ENCODE measurements at regions of chr9 and their contacts with region 1.

Region 1: GRCh38 chr9:19184144-19184917 is 46.2 kb upstream of the DENND4C start:
- DNase-seq: peak; percentile 81 to 88
- ATAC-seq: peak; percentile 85 to 98 (median 98)
- H3K4me3 ChIP-seq: no peak overlapping the region
- H3K4me3 Mint-ChIP-seq: peak overlapping the region; percentile 72
- H3K27ac ChIP-seq: peak overlapping the region; percentile 84
- H3K27ac Mint-ChIP-seq: peak overlapping the region; percentile 96 to 97
- H3K4me1 ChIP-seq: peaks cover 56% of the 10 kb centered on the region
- H3K4me1 Mint-ChIP-seq: peaks cover 26 to 32% of the 10 kb centered on the region in 2 donors
- H3K27me3 ChIP-seq: no peaks in the 10 kb centered on the region
- H3K27me3 Mint-ChIP-seq: no peaks in the 10 kb centered on the region
- CTCF ChIP-seq: no peak

Region 2: DNA sequence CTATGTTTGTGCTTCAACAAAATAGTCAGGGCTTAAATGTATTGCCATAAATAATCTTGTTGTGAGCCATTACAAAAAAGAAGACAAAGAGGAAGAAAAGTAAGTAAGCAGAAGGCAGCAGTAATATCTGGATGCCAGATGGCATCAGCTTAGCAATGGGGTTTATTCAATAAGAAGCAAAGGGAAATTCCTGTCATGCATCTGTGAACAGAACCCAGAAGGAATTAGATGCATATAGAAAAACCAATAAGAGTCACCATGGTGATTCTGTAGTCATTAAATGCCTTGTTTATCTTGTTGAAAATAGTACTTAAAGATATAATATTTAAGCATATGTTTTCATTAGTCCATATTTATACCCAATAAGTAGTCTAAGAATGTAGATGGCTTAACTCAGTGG is 494.4 kb before region 1 on chr9:
- intact Hi-C with region 1: no loop called
- DNase-seq: no peak
- ATAC-seq: no peak
- H3K4me3 ChIP-seq: no peak overlapping the region
- H3K4me3 Mint-ChIP-seq: no peak overlapping the region
- H3K27ac ChIP-seq: no peak overlapping the region
- H3K27ac Mint-ChIP-seq: no peak overlapping the region
- H3K4me1 ChIP-seq: no peaks in the 10 kb centered on the region
- H3K4me1 Mint-ChIP-seq: no peaks in the 10 kb centered on the region
- H3K27me3 ChIP-seq: no peaks in the 10 kb centered on the region
- H3K27me3 Mint-ChIP-seq: peaks cover 0 to 3% of the 10 kb centered on the region in 2 donors
- CTCF ChIP-seq: no peak

Region 3: DNA sequence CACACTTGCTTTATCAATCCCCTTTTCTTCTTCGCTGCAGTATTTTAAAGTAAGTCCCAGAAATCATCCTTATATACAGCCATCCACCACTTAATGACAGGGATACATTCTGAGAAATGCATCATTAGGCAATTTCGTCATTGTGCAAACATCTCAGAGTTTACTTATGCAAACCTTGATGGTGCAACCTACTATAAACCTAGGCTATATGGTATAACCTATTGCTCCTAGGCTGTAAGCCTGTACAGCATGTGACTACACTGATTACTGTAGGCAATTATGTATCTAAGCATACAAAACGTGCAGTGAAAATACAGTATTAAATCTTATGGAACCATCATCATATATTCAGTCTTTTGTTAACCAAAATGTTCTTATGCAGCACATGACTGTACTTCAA is 188.1 kb before region 1 on chr9:
- intact Hi-C with region 1: no loop called
- DNase-seq: no peak
- ATAC-seq: no peak
- H3K4me3 ChIP-seq: no peak overlapping the region
- H3K4me3 Mint-ChIP-seq: no peak overlapping the region
- H3K27ac ChIP-seq: no peak overlapping the region
- H3K27ac Mint-ChIP-seq: no peak overlapping the region
- H3K4me1 ChIP-seq: no peaks in the 10 kb centered on the region
- H3K4me1 Mint-ChIP-seq: no peaks in the 10 kb centered on the region
- H3K27me3 ChIP-seq: no peaks in the 10 kb centered on the region
- H3K27me3 Mint-ChIP-seq: peaks cover 0 to 8% of the 10 kb centered on the region in 2 donors
- CTCF ChIP-seq: no peak

Region 4: DNA sequence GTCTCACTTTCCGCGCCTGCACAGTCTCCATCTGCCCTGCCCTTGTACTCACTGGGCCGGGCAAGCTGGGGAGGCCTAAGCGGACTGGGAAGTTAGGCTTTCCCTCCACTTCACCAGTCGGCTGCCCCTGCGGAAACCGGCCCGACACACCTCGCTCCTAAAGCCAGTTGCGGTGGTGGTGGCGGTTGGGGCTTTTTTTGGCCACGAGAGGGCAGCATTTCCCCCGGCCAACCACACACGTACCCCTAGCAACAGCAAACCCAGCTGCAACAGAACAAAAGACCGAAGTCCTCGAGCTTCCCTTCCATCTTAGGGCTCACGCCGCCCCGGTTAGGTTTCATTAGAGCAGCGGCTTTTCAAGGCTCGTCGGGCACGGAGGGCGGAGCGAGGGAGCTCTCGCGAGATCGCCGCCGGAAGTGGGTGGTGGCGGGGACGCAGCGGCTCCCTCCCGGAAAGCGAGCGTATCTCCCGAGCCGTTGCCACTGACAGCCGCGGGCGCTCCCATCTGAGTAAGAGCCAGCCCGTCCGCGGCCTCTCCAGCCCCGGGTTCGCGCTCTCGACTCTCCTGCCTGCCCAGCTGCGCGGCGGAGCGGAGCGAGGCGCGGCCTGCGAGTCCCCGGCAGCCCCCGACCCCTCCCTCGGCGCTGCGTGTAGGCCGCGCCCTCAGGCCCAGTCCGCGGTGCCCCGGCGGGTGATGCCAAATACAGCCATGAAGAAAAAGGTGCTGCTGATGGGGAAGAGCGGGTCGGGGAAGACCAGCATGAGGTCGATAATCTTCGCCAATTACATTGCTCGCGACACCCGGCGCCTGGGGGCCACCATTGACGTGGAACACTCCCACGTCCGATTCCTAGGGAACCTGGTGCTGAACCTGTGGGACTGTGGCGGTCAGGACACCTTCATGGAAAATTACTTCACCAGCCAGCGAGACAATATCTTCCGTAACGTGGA is 135.1 kb before region 1 on chr9 and contains the start of gene RRAGA:
- intact Hi-C with region 1: no loop called
- DNase-seq: peak; percentile 94 to 97
- ATAC-seq: peak; percentile 92 to 96 (median 93)
- H3K4me3 ChIP-seq: peak within 1 kb of the TSS; percentile 77
- H3K4me3 Mint-ChIP-seq: peak within 1 kb of the TSS; percentile 94
- H3K27ac ChIP-seq: peak within 1 kb of the TSS; percentile 82
- H3K27ac Mint-ChIP-seq: peak within 1 kb of the TSS; percentile 95 to 96
- H3K4me1 ChIP-seq: peaks cover 20% of the 10 kb centered on the region
- H3K4me1 Mint-ChIP-seq: peaks cover 30 to 33% of the 10 kb centered on the region in 2 donors
- H3K27me3 ChIP-seq: no peaks in the 10 kb centered on the region
- H3K27me3 Mint-ChIP-seq: no peaks in the 10 kb centered on the region
- CTCF ChIP-seq: peak; percentile 69
- total RNA-seq, gene RRAGA: 39.0 to 43.9 (median 41.5) TPM

Region 5: DNA sequence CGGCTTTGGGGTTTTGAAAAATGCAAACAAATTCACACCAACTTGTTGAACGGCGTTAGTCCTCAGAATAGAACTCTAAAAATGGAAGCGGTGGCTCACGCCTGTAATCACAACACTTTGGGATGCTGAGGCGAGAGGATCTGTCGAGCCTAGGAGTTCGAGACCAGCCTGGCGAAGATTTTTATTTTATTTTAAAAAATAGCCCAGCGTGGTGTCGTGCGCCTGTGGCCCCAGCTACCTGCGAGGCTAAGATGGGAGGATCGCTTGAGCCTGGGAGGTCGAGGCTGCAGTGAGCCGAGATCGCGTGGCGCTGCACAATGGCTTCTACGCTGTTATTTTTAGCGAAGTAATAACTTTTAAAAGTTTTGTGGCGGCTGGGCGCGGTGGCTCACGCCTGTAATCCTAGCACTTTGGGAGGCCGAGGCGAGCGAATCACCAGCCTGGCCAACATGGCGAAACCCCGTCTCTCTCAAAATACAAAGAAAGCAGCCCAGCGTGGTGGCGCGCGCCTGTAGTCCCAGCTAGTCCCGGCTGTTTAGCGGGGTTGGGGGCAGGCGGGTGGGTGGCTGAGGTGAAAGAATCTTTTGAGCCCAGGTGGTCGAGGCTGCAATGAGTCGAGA is 56.3 kb before region 1 on chr9:
- intact Hi-C with region 1: loop called (anchors 2 kb)
- DNase-seq: peak; percentile 37 to 60
- ATAC-seq: peak; percentile 20 to 29 (median 21)
- H3K4me3 ChIP-seq: peak overlapping the region; percentile 86
- H3K4me3 Mint-ChIP-seq: peak overlapping the region; percentile 92
- H3K27ac ChIP-seq: peak overlapping the region; percentile 71
- H3K27ac Mint-ChIP-seq: peak overlapping the region; percentile 86 to 93
- H3K4me1 ChIP-seq: peaks cover 36% of the 10 kb centered on the region
- H3K4me1 Mint-ChIP-seq: peaks cover 23 to 39% of the 10 kb centered on the region in 2 donors
- H3K27me3 ChIP-seq: no peaks in the 10 kb centered on the region
- H3K27me3 Mint-ChIP-seq: no peaks in the 10 kb centered on the region
- CTCF ChIP-seq: no peak

Region 6: DNA sequence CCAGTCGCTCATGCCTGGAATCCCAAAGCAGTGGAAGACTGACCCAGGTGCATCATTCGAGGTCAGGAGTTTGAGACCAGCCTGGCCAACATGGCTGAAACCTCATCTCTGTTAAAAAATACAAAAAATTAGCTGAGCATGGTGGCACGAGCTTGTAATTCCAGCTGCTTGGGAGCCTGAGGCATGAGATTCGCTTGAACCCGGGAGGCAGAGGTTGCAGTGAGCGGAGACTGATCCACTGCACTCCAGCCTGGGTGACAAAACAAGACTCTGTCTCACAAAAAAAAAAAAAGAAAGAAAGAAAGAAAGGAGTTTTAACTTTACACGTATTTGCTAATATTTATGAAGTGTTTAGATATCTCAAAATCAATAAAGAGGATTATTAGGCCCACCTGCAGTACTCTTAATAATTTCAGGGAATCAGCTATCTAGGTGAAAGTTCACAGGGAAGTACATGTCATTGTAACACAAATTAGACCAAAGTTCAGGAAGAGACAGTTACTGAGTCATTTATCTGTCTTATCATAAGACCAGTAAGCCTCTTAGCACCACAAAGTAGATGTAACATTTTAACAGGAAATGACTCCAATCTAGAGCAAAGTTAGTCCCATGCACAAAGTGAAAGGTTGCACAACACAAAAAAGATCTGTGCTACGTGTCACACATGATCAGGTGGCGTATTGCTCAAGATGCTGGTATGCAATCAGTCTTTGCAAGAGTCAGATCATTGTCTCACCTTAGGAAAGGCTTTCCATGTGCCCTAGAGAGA is 22.9 kb before region 1 on chr9:
- intact Hi-C with region 1: loop called (anchors 1 kb)
- DNase-seq: peak; percentile 50 to 75
- ATAC-seq: peak; percentile 92 to 97 (median 96)
- H3K4me3 ChIP-seq: no peak overlapping the region
- H3K4me3 Mint-ChIP-seq: peak overlapping the region; percentile 73
- H3K27ac ChIP-seq: peak overlapping the region; percentile 90
- H3K27ac Mint-ChIP-seq: peak overlapping the region; percentile 77 to 98
- H3K4me1 ChIP-seq: peaks cover 18% of the 10 kb centered on the region
- H3K4me1 Mint-ChIP-seq: peaks cover 23 to 24% of the 10 kb centered on the region in 2 donors
- H3K27me3 ChIP-seq: no peaks in the 10 kb centered on the region
- H3K27me3 Mint-ChIP-seq: no peaks in the 10 kb centered on the region
- CTCF ChIP-seq: no peak

Region 7: GRCh38 chr9:19230356-19231125 is 46.2 kb after region 1 on chr9 and contains the start of gene DENND4C:
- intact Hi-C with region 1: loop called (anchors 1 kb)
- DNase-seq: peak; percentile 72 to 89
- ATAC-seq: peak; percentile 78 to 89 (median 81)
- H3K4me3 ChIP-seq: peak within 1 kb of the TSS; percentile 49
- H3K4me3 Mint-ChIP-seq: peak within 1 kb of the TSS; percentile 84
- H3K27ac ChIP-seq: peak within 1 kb of the TSS; percentile 65
- H3K27ac Mint-ChIP-seq: no peak within 1 kb of the TSS
- H3K4me1 ChIP-seq: peaks cover 10% of the 10 kb centered on the region
- H3K4me1 Mint-ChIP-seq: peaks cover 8 to 15% of the 10 kb centered on the region in 2 donors
- H3K27me3 ChIP-seq: no peaks in the 10 kb centered on the region
- H3K27me3 Mint-ChIP-seq: no peaks in the 10 kb centered on the region
- CTCF ChIP-seq: no peak
- total RNA-seq, gene DENND4C: 82.6 to 115 (median 100) TPM

Region 8: GRCh38 chr9:19379697-19380046 is 195.3 kb after region 1 on chr9:
- intact Hi-C with region 1: loop called (anchors 2 kb)
- DNase-seq: peak in 1 of 2 donors; percentile 72
- ATAC-seq: peak; percentile 41 to 58 (median 50)
- H3K4me3 ChIP-seq: peak overlapping the region; percentile 72
- H3K4me3 Mint-ChIP-seq: peak overlapping the region; percentile 96
- H3K27ac ChIP-seq: peak overlapping the region; percentile 88
- H3K27ac Mint-ChIP-seq: peak overlapping the region; percentile 93 to 99
- H3K4me1 ChIP-seq: peaks cover 17% of the 10 kb centered on the region
- H3K4me1 Mint-ChIP-seq: peaks cover 36 to 46% of the 10 kb centered on the region in 2 donors
- H3K27me3 ChIP-seq: no peaks in the 10 kb centered on the region
- H3K27me3 Mint-ChIP-seq: no peaks in the 10 kb centered on the region
- CTCF ChIP-seq: no peak

Measured in natural killer cell (primary cell).